GM10248 (cell line): ENCODE measurements at regions of chr1 and their contacts with region 1.

Region 1: DNA sequence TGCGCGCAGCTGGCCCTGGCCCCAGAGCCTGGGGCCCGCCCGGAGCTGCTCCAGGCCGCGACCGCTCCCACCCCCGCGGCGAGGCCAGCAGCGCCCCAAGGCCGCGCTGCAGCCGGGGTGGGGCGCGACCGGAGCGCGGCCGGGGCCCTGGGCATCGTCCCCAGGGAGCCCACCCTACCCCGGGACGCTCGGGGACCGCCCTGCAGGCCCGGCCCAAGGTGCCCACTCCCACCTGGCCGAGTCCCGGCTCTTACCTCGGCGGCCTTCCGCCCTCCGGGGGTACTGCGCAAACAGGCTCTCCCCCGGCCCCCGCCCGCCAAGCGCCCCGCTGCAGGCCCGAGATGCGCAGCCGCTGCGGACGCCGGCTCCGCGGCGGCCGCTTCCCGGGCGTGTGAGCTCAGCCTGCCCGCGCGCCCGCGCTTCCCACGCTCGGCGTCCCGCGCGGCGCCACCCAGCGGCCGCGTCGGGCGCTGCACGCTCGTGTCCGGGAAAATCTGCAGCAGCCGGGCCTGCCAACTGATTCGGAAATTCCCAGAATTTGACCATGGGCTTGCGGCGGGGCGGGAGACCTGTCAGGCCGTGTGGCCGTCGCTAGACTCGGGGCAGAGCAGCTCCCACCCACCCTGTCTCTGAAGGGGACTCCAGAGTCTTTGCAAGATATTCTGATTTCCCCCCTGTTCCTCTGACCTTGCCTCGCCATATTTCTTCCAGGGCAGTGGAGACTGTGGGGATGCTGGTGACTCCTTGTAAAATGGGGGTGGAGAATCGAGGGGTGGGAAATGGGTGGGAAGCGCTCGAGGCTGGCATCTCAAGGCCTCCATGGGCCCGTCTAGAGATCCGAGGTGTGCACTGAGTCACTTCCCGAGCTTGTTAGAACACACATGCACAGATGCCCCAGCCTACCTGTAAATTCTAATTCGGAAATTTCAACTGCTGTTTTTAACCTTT is 41.9 kb downstream of the CD34 start:
- DNase-seq: peak; percentile 89
- CTCF ChIP-seq: peak; percentile 95

Region 2: GRCh38 chr1:207822602-207823451 is 46.2 kb before region 1 on chr1:
- CTCF ChIA-PET with region 1: interaction called, 661 read pairs
- POLR2A ChIA-PET with region 1: interaction called, 18 read pairs
- DNase-seq: peak; percentile 94
- CTCF ChIP-seq: no peak

Region 3: DNA sequence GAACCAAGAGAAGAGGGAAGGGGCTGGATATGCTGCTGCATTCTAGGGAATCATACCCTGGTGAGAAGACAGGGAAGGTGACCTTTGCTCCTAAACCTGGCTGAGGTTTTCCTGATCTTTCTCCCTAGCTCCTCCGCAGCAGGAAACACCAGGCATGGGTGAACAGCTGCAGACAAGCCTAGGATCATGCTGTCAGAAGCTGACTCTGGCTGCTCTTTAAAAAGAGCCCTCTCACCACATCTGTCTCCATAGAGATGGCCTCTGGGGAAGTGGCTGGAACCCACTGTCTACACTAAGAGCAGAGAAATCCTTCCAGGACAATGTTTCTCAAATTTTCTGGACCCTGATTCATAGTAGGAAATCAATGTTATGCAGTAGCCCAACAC is 15.7 kb before region 1 on chr1:
- CTCF ChIA-PET with region 1: interaction called, 29 read pairs
- POLR2A ChIA-PET with region 1: no interaction called
- DNase-seq: no peak
- CTCF ChIP-seq: no peak

Region 4: GRCh38 chr1:207946756-207947155 is 77.7 kb after region 1 on chr1:
- CTCF ChIA-PET with region 1: interaction called, 10 read pairs
- POLR2A ChIA-PET with region 1: no interaction called
- DNase-seq: no peak
- CTCF ChIP-seq: no peak

Region 5: DNA sequence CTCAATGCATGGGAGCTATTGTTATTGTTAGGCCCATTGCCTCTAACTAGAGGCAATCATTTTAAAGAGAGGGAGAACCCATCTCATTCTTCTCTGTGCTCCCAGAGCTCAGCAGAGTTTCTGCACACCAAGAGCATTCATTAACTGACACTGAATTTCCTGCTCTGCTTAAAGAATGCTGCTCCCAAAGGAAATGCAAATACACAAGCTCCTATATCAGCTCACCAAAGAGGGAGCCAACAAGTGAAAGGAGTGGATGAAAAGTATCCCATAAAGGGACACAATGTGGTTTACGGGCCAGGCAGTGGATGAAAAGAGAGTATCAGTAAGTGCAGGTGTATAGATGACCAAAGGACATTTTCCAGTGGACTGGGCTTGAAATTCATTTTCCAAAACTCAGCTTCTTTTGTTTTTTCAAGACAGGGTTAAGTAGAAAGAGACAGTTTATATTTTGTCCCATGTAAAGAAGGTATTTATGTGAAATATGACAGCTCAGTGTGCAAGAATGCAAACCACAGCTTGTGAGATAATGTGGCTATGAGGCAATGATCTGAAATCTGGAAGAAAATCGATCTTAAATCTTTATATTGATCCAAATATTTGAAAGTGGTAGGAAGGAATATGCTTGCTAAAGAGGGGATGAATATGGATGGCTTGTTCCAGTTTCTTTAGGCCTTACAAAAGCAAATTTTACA is 1506.8 kb after region 1 on chr1:
- CTCF ChIA-PET with region 1: no interaction called
- POLR2A ChIA-PET with region 1: no interaction called
- DNase-seq: no peak
- CTCF ChIP-seq: no peak